Activated CD4-positive, alpha-beta memory T cell treated with anti-CD3 and anti-CD28 coated beads, Interleukin-2, amount 10 ng/mL, durations not matched to agents 7 days and 5 days (primary cell): ENCODE measurements at regions of chr12 and their contacts with region 1.

Region 1: GRCh38 chr12:55188974-55189556 is 31.8 kb upstream of the OR10A7 start:
- DNase-seq: peak; percentile 33
- H3K4me3 Mint-ChIP-seq: no peak overlapping the region
- H3K27ac Mint-ChIP-seq: no peak overlapping the region
- H3K4me1 Mint-ChIP-seq: no peaks in the 10 kb centered on the region
- H3K27me3 Mint-ChIP-seq: peaks cover 16% of the 10 kb centered on the region

Region 2: GRCh38 chr12:55262587-55262986 is 73.5 kb after region 1 on chr12:
- CTCF ChIA-PET with region 1: no interaction called
- POLR2A ChIA-PET with region 1: no interaction called
- DNase-seq: no peak
- H3K4me3 Mint-ChIP-seq: no peak overlapping the region
- H3K27ac Mint-ChIP-seq: no peak overlapping the region
- H3K4me1 Mint-ChIP-seq: no peaks in the 10 kb centered on the region
- H3K27me3 Mint-ChIP-seq: no peaks in the 10 kb centered on the region

Region 3: GRCh38 chr12:55619354-55620138 is 430.5 kb after region 1 on chr12:
- CTCF ChIA-PET with region 1: interaction called, 10 read pairs
- POLR2A ChIA-PET with region 1: interaction called, 3 read pairs
- DNase-seq: peak; percentile 28
- H3K4me3 Mint-ChIP-seq: no peak overlapping the region
- H3K27ac Mint-ChIP-seq: no peak overlapping the region
- H3K4me1 Mint-ChIP-seq: no peaks in the 10 kb centered on the region
- H3K27me3 Mint-ChIP-seq: peaks cover 31% of the 10 kb centered on the region